Naive thymus-derived CD4-positive, alpha-beta T cell (primary cell): ENCODE measurements at regions of chr11 and their contacts with region 1.

Region 1: DNA sequence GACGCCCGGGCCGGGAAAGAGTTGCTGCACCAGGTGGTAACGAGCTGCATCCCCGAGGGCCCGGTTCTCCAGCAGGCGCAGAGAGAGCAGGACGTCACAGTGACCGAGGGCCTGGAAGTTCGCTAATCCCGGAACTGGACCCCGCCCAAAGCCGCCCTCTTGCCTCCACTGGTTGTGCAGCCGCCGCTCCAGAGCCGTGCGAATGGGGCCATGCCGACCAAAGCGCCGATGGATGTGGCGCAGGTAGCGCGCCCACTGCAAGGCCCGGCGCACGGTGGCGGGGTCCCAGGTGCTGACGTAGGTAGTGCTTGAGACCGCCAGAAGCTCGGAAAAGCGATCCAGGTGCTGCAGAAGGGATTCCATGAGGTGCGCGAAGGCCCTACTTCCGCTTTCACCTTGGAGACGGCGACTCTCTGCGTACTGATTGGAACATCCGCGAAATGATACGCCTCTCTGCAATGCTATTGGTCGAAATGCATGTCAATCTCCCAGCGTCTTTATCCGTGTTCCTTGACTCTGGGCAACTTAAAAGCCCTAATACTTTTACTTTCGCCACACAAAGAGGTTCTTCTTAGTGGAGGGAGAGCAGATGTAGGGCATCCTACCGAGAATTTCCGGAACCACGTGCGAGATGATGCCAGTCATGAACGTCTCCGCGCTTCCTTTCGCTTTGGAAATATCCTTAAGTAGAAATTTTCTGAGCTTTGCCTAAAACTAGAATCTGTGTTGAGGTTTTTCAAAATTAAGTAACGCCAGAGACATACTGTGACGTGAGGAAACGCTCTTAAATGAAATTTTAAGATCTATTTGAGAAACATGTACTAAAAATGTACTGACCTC is at the start of gene FANCF:
- DNase-seq: peak; percentile 73 to 97 (median 95)
- ATAC-seq: peak; percentile 96
- H3K4me3 ChIP-seq: peak within 1 kb of the TSS; percentile 98
- H3K4me3 Mint-ChIP-seq: peak within 1 kb of the TSS; percentile 93 to 99 (median 98)
- H3K27ac ChIP-seq: peak within 1 kb of the TSS; percentile 87
- H3K27ac Mint-ChIP-seq: peak within 1 kb of the TSS; percentile 92 to 99 (median 97)
- H3K4me1 ChIP-seq: peaks cover 15 to 31% of the 10 kb centered on the region in 2 donors
- H3K4me1 Mint-ChIP-seq: peaks cover 27 to 57% (median 49%) of the 10 kb centered on the region in 7 donors
- H3K27me3 ChIP-seq: no peaks in the 10 kb centered on the region
- H3K27me3 Mint-ChIP-seq: no peaks in the 10 kb centered on the region
- total RNA-seq, gene FANCF: 7.4 to 22.6 (median 19.5) TPM

Region 2: DNA sequence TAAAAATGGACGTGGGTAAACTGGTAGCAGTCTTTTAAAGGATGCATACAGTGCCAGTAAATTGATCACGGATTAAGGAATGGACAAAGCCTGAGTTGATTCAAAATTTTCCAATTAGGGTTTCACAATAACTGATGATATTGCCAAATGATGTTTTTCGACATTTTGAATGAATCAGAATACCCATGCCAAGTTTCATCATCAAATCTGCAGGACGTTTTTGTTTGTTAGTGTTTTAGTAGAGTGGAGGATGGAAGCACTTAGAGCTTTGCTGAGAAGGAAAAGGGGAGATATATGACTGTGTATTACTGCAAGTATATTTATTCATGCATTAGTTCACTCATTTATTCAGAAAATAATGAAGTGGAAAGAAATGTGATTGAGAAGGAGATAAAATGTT is 209.2 kb before region 1 on chr11:
- CTCF ChIA-PET with region 1: no interaction called
- POLR2A ChIA-PET with region 1: no interaction called
- intact Hi-C with region 1: no loop called
- DNase-seq: no peak
- ATAC-seq: no peak
- H3K4me3 ChIP-seq: no peak overlapping the region
- H3K4me3 Mint-ChIP-seq: no peak overlapping the region
- H3K27ac ChIP-seq: no peak overlapping the region
- H3K27ac Mint-ChIP-seq: no peak overlapping the region
- H3K4me1 ChIP-seq: no peaks in the 10 kb centered on the region
- H3K4me1 Mint-ChIP-seq: no peaks in the 10 kb centered on the region
- H3K27me3 ChIP-seq: no peaks in the 10 kb centered on the region
- H3K27me3 Mint-ChIP-seq: peaks cover 0 to 18% (median 12%) of the 10 kb centered on the region in 5 donors

Region 3: GRCh38 chr11:22657101-22657694 is 31.5 kb after region 1 on chr11:
- CTCF ChIA-PET with region 1: interaction called, 3 read pairs
- POLR2A ChIA-PET with region 1: interaction called, 3 read pairs
- intact Hi-C with region 1: loop called in 1 of 2 experiments (anchors 5 kb)
- DNase-seq: peak in 6 of 9 donors; percentile 7 to 52 (median 34)
- ATAC-seq: peak; percentile 80
- H3K4me3 ChIP-seq: no peak overlapping the region
- H3K4me3 Mint-ChIP-seq: peak overlapping the region in 7 of 10 donors; percentile 0 to 64 (median 46)
- H3K27ac ChIP-seq: no peak overlapping the region
- H3K27ac Mint-ChIP-seq: peak overlapping the region; percentile 14 to 89 (median 31)
- H3K4me1 ChIP-seq: peaks cover 8 to 11% of the 10 kb centered on the region in 2 donors
- H3K4me1 Mint-ChIP-seq: peaks cover 12 to 36% (median 30%) of the 10 kb centered on the region in 7 donors
- H3K27me3 ChIP-seq: no peaks in the 10 kb centered on the region
- H3K27me3 Mint-ChIP-seq: peaks cover 0 to 2% (median 0%) of the 10 kb centered on the region in 5 donors

Region 4: GRCh38 chr11:22690871-22691270 is 65.2 kb after region 1 on chr11:
- CTCF ChIA-PET with region 1: interaction called, 4 read pairs
- POLR2A ChIA-PET with region 1: interaction called, 14 read pairs
- intact Hi-C with region 1: loop called in 1 of 2 experiments (anchors 1 kb)
- DNase-seq: peak in 7 of 9 donors; percentile 43 to 74 (median 65)
- ATAC-seq: peak; percentile 91
- H3K4me3 ChIP-seq: peak overlapping the region; percentile 45
- H3K4me3 Mint-ChIP-seq: peak overlapping the region; percentile 48 to 94 (median 84)
- H3K27ac ChIP-seq: peak overlapping the region; percentile 66
- H3K27ac Mint-ChIP-seq: peak overlapping the region; percentile 10 to 97 (median 94)
- H3K4me1 ChIP-seq: peaks cover 0 to 9% of the 10 kb centered on the region in 2 donors
- H3K4me1 Mint-ChIP-seq: peaks cover 5 to 41% (median 29%) of the 10 kb centered on the region in 7 donors
- H3K27me3 ChIP-seq: no peaks in the 10 kb centered on the region
- H3K27me3 Mint-ChIP-seq: no peaks in the 10 kb centered on the region

Region 5: DNA sequence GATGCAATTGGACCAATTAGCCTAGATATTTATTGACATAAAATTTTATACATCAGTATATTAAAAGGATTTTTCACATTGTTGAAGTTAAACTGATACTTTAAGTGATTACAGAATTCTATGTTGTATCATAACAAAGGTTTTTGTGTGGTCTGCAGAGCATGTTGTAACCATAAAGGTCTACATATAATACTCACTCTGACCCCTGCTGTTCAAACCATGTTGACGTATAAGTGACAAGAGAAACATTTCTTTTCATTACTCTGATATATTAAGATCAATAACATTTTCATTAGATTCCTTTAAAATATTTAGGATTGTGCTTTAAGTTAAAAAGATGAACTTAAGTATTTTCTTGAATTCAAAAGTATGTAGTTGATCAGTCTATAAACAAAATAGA is 104.7 kb after region 1 on chr11:
- CTCF ChIA-PET with region 1: no interaction called
- POLR2A ChIA-PET with region 1: no interaction called
- intact Hi-C with region 1: loop called in 1 of 2 experiments (anchors 1 kb)
- DNase-seq: peak in 6 of 9 donors; percentile 17 to 50 (median 22)
- ATAC-seq: peak; percentile 41
- H3K4me3 ChIP-seq: no peak overlapping the region
- H3K4me3 Mint-ChIP-seq: no peak overlapping the region
- H3K27ac ChIP-seq: no peak overlapping the region
- H3K27ac Mint-ChIP-seq: no peak overlapping the region
- H3K4me1 ChIP-seq: no peaks in the 10 kb centered on the region
- H3K4me1 Mint-ChIP-seq: no peaks in the 10 kb centered on the region
- H3K27me3 ChIP-seq: no peaks in the 10 kb centered on the region
- H3K27me3 Mint-ChIP-seq: peaks cover 0 to 3% (median 0%) of the 10 kb centered on the region in 5 donors

Region 6: GRCh38 chr11:22829231-22830081 is 203.8 kb after region 1 on chr11 and contains the start of gene SVIP:
- CTCF ChIA-PET with region 1: interaction called, 5 read pairs
- POLR2A ChIA-PET with region 1: interaction called, 21 read pairs
- intact Hi-C with region 1: loop called (anchors 1 kb)
- DNase-seq: peak; percentile 82 to 92 (median 89)
- ATAC-seq: peak; percentile 98
- H3K4me3 ChIP-seq: peak within 1 kb of the TSS; percentile 88
- H3K4me3 Mint-ChIP-seq: peak within 1 kb of the TSS; percentile 85 to 96 (median 94)
- H3K27ac ChIP-seq: peak within 1 kb of the TSS; percentile 87
- H3K27ac Mint-ChIP-seq: peak within 1 kb of the TSS; percentile 87 to 97 (median 93)
- H3K4me1 ChIP-seq: peaks cover 12 to 16% of the 10 kb centered on the region in 2 donors
- H3K4me1 Mint-ChIP-seq: peaks cover 7 to 22% (median 18%) of the 10 kb centered on the region in 7 donors
- H3K27me3 ChIP-seq: no peaks in the 10 kb centered on the region
- H3K27me3 Mint-ChIP-seq: no peaks in the 10 kb centered on the region
- total RNA-seq, gene SVIP: 33.4 to 70.6 (median 49.2) TPM